B cell (primary cell): ENCODE measurements at regions of chr14 and their contacts with region 1.

Region 1: GRCh38 chr14:61837336-61838229 is 75.4 kb downstream of the SNAPC1 start:
- DNase-seq: peak; percentile 84
- ATAC-seq: peak; percentile 97
- H3K4me3 ChIP-seq: no peak overlapping the region
- H3K4me3 Mint-ChIP-seq: no peak overlapping the region
- H3K27ac ChIP-seq: no peak overlapping the region
- H3K27ac Mint-ChIP-seq: no peak overlapping the region
- H3K4me1 ChIP-seq: peaks cover 0 to 7% of the 10 kb centered on the region in 2 donors
- H3K4me1 Mint-ChIP-seq: no peaks in the 10 kb centered on the region
- H3K27me3 ChIP-seq: no peaks in the 10 kb centered on the region
- H3K27me3 Mint-ChIP-seq: peaks cover 5% of the 10 kb centered on the region
- CTCF ChIP-seq: peak; percentile 93

Region 2: DNA sequence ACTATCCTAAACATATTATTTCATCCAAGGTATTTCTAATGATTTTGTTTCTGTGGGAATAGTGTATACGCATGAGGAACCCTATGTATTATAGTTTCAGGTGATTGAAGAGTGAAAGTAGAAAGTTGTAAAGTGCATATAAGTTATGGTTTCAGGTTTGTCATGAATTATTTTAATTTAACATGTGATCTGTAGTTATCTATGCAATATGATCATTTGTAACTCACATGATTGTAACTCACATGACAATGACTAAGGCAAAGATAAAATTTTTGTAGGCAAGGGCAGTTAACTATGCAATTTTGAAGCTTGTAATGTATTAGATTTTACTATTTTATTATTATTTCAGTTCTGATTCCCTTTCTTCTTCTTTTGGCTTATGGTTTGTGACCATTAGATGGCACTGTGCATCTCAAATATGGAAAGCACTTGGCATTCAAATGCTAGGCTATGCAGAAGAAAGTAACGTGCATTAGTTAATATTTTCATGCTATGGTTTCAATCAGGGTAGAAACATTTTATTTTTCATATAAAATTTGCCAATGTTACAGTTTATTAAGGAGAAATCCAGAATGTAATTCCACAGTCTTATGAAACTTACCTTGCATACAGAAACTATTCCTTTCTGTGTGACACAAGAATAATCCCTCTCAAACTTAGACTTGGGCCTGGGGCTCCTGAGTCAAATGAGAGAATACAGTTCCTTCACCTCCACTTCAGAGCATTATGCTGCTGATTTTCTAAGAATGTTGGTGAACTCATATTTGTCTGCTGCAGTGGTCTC is 540.7 kb before region 1 on chr14:
- CTCF ChIA-PET with region 1: interaction called, 36 read pairs
- POLR2A ChIA-PET with region 1: no interaction called
- intact Hi-C with region 1: loop called (anchors 1 kb)
- DNase-seq: peak; percentile 36
- ATAC-seq: no peak
- H3K4me3 ChIP-seq: no peak overlapping the region
- H3K4me3 Mint-ChIP-seq: no peak overlapping the region
- H3K27ac ChIP-seq: no peak overlapping the region
- H3K27ac Mint-ChIP-seq: no peak overlapping the region
- H3K4me1 ChIP-seq: no peaks in the 10 kb centered on the region
- H3K4me1 Mint-ChIP-seq: no peaks in the 10 kb centered on the region
- H3K27me3 ChIP-seq: no peaks in the 10 kb centered on the region
- H3K27me3 Mint-ChIP-seq: peaks cover 10% of the 10 kb centered on the region
- CTCF ChIP-seq: peak; percentile 73

Region 3: GRCh38 chr14:61475316-61475715 is 362.3 kb before region 1 on chr14:
- CTCF ChIA-PET with region 1: interaction called, 17 read pairs
- POLR2A ChIA-PET with region 1: interaction called, 3 read pairs
- intact Hi-C with region 1: no loop called
- DNase-seq: peak; percentile 81
- ATAC-seq: no peak
- H3K4me3 ChIP-seq: no peak overlapping the region
- H3K4me3 Mint-ChIP-seq: peak overlapping the region; percentile 53
- H3K27ac ChIP-seq: peak overlapping the region; percentile 97 to 98
- H3K27ac Mint-ChIP-seq: peak overlapping the region; percentile 86
- H3K4me1 ChIP-seq: peaks cover 90 to 96% of the 10 kb centered on the region in 2 donors
- H3K4me1 Mint-ChIP-seq: peaks cover 93% of the 10 kb centered on the region
- H3K27me3 ChIP-seq: no peaks in the 10 kb centered on the region
- H3K27me3 Mint-ChIP-seq: no peaks in the 10 kb centered on the region
- CTCF ChIP-seq: peak; percentile 80

Region 4: DNA sequence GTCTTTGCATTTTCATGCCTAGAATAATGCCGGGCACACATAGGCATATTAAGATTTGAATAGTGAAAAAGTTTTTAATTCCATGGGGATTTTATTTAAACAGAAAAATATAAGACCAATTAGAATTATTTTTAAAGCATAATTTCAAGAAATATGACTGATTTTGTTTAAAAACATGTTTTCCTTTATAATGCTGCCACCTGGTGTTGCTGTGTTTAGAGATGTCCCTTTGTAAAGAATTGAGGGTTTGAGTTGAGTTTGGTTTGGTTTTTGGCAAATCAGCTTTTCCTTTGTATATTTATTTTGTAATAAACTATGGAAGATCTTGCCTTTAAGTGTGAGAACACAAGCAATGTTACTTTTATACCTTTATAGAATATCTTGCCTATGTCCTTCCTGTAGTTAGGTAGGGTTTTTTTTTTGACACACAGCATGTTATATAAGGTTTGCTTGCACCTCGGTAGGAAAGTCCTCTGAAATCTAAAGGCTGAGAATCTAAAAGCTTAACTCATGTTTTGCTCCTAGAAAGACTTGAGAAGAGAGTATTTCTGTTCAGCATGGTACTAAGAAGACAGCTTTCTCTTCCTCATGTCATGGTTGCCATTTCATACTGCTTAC is 106.7 kb before region 1 on chr14:
- CTCF ChIA-PET with region 1: interaction called, 34 read pairs
- POLR2A ChIA-PET with region 1: no interaction called
- intact Hi-C with region 1: loop called (anchors 2 kb)
- DNase-seq: peak; percentile 51
- ATAC-seq: no peak
- H3K4me3 ChIP-seq: no peak overlapping the region
- H3K4me3 Mint-ChIP-seq: no peak overlapping the region
- H3K27ac ChIP-seq: peak overlapping the region in 1 of 2 donors; percentile 50
- H3K27ac Mint-ChIP-seq: peak overlapping the region; percentile 68
- H3K4me1 ChIP-seq: peaks cover 12% of the 10 kb centered on the region in 2 donors
- H3K4me1 Mint-ChIP-seq: peaks cover 42% of the 10 kb centered on the region
- H3K27me3 ChIP-seq: no peaks in the 10 kb centered on the region
- H3K27me3 Mint-ChIP-seq: no peaks in the 10 kb centered on the region
- CTCF ChIP-seq: peak; percentile 68

Region 5: GRCh38 chr14:61812761-61813606 is 24.6 kb before region 1 on chr14:
- CTCF ChIA-PET with region 1: interaction called, 22 read pairs
- POLR2A ChIA-PET with region 1: no interaction called
- intact Hi-C with region 1: no loop called
- DNase-seq: peak; percentile 36
- ATAC-seq: peak; percentile 14
- H3K4me3 ChIP-seq: peak overlapping the region in 4 of 5 experiments; percentile 13 to 41 (median 36)
- H3K4me3 Mint-ChIP-seq: peak overlapping the region; percentile 77
- H3K27ac ChIP-seq: no peak overlapping the region
- H3K27ac Mint-ChIP-seq: no peak overlapping the region
- H3K4me1 ChIP-seq: peaks cover 6 to 7% of the 10 kb centered on the region in 2 donors
- H3K4me1 Mint-ChIP-seq: peaks cover 11% of the 10 kb centered on the region
- H3K27me3 ChIP-seq: peaks cover 0 to 37% (median 33%) of the 10 kb centered on the region in 4 experiments
- H3K27me3 Mint-ChIP-seq: peaks cover 55% of the 10 kb centered on the region
- CTCF ChIP-seq: no peak